CD8-positive, alpha-beta T cell (primary cell): ENCODE measurements at regions of chr3 and their contacts with region 1.

Region 1: GRCh38 chr3:197970588-197970987 is 10.6 kb downstream of the LMLN start:
- DNase-seq: no peak
- ATAC-seq: no peak
- H3K4me3 ChIP-seq: no peak overlapping the region
- H3K4me3 Mint-ChIP-seq: no peak overlapping the region
- H3K27ac ChIP-seq: no peak overlapping the region
- H3K27ac Mint-ChIP-seq: no peak overlapping the region
- H3K4me1 ChIP-seq: no peaks in the 10 kb centered on the region
- H3K4me1 Mint-ChIP-seq: peaks cover 5% of the 10 kb centered on the region
- H3K27me3 ChIP-seq: no peaks in the 10 kb centered on the region
- H3K27me3 Mint-ChIP-seq: no peaks in the 10 kb centered on the region
- CTCF ChIP-seq: no peak

Region 2: DNA sequence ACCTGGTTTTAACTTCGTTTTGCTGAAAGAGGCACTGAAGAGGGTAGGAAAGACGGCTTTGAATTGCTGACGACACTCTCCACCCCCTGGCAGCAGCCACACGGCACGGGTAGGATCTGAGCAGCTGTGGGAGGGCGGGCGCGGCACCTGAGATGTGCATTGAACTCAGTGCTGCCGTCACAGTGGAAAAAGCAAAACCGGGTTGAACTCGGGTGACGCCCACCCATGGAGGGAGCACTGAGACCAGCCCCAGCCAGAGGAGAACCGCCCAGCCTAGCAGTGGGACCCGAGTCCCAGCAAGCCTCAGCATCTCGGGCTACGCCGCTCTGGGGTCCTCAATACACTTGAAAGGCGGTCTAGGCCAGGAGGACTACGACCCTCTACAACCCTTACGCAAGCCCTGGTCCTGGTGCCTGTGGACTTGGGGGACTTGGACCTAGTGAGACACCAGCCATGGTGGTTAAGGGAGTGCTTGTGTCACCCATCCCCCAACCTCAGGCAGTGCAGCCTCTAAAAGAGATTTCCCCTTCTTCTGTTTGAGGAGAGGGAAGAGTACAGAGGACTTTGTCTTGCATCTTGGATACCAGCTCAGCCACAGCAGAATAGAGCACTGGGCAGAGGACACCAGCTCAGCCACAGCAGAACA is 70.6 kb before region 1 on chr3:
- CTCF ChIA-PET with region 1: no interaction called
- POLR2A ChIA-PET with region 1: no interaction called
- intact Hi-C with region 1: no loop called
- DNase-seq: no peak
- ATAC-seq: no peak
- H3K4me3 ChIP-seq: no peak overlapping the region
- H3K4me3 Mint-ChIP-seq: no peak overlapping the region
- H3K27ac ChIP-seq: no peak overlapping the region
- H3K27ac Mint-ChIP-seq: no peak overlapping the region
- H3K4me1 ChIP-seq: no peaks in the 10 kb centered on the region
- H3K4me1 Mint-ChIP-seq: no peaks in the 10 kb centered on the region
- H3K27me3 ChIP-seq: no peaks in the 10 kb centered on the region
- H3K27me3 Mint-ChIP-seq: no peaks in the 10 kb centered on the region
- CTCF ChIP-seq: no peak

Region 3: GRCh38 chr3:197926418-197926817 is 44.2 kb before region 1 on chr3:
- CTCF ChIA-PET with region 1: no interaction called
- POLR2A ChIA-PET with region 1: no interaction called
- intact Hi-C with region 1: loop called in 1 of 2 experiments (anchors 5 kb)
- DNase-seq: no peak
- ATAC-seq: no peak
- H3K4me3 ChIP-seq: no peak overlapping the region
- H3K4me3 Mint-ChIP-seq: no peak overlapping the region
- H3K27ac ChIP-seq: no peak overlapping the region
- H3K27ac Mint-ChIP-seq: no peak overlapping the region
- H3K4me1 ChIP-seq: no peaks in the 10 kb centered on the region
- H3K4me1 Mint-ChIP-seq: no peaks in the 10 kb centered on the region
- H3K27me3 ChIP-seq: no peaks in the 10 kb centered on the region
- H3K27me3 Mint-ChIP-seq: no peaks in the 10 kb centered on the region
- CTCF ChIP-seq: no peak